MCF 10A (cell line): ENCODE measurements at regions of chr17 and their contacts with region 1.

Region 1: GRCh38 chr17:10618202-10618635 is 38.9 kb downstream of the MYH3 start:
- DNase-seq: peak; percentile 78
- H3K4me3 Mint-ChIP-seq: no peak overlapping the region
- H3K27ac Mint-ChIP-seq: no peak overlapping the region
- H3K4me1 Mint-ChIP-seq: peaks cover 16% of the 10 kb centered on the region
- H3K27me3 Mint-ChIP-seq: no peaks in the 10 kb centered on the region
- CTCF ChIP-seq: peak; percentile 91

Region 2: DNA sequence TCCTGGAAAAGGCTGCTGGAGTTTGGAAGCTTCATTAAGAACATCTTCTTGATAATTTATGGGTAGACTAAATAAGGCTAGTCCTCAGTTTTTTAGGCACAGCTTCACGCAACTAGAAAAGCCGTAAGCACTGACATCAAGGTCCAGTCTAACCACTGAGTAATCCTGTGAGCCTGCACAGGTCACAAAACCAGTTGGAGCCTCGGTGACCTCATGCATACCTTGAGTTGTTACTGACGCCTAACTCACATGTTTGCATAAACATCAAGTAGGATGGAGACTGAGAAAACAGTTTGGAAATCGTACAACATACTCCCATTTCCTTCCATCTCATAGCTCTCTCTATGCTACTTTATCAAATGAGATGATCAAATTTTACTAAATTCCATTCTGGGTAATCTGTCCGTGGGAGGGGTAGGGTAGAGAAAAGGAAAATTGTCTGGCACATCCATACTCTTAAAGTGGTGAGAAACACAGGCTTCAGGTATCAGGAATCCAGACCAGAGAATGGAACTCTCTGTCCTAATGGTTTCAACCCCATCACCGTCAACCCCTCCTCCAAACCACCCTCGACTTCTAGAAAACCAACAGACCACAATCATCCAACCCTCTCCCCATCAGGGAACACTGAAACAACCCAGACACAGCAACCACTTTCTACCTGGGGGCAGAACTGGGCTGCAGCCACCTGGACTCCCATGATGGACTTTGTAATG is 649.2 kb before region 1 on chr17:
- CTCF ChIA-PET with region 1: interaction called, 7 read pairs
- POLR2A ChIA-PET with region 1: no interaction called
- intact Hi-C with region 1: loop called (anchors 1 kb)
- DNase-seq: no peak
- H3K4me3 Mint-ChIP-seq: no peak overlapping the region
- H3K27ac Mint-ChIP-seq: no peak overlapping the region
- H3K4me1 Mint-ChIP-seq: peaks cover 5% of the 10 kb centered on the region
- H3K27me3 Mint-ChIP-seq: no peaks in the 10 kb centered on the region
- CTCF ChIP-seq: no peak

Region 3: GRCh38 chr17:10316801-10317542 is 301.2 kb before region 1 on chr17:
- CTCF ChIA-PET with region 1: interaction called, 26 read pairs
- POLR2A ChIA-PET with region 1: no interaction called
- intact Hi-C with region 1: no loop called
- DNase-seq: peak; percentile 65
- H3K4me3 Mint-ChIP-seq: no peak overlapping the region
- H3K27ac Mint-ChIP-seq: no peak overlapping the region
- H3K4me1 Mint-ChIP-seq: peaks cover 10% of the 10 kb centered on the region
- H3K27me3 Mint-ChIP-seq: peaks cover 25% of the 10 kb centered on the region
- CTCF ChIP-seq: peak; percentile 73

Region 4: GRCh38 chr17:10589553-10590125 is 28.6 kb before region 1 on chr17:
- CTCF ChIA-PET with region 1: interaction called, 29 read pairs
- POLR2A ChIA-PET with region 1: no interaction called
- intact Hi-C with region 1: no loop called
- DNase-seq: no peak
- H3K4me3 Mint-ChIP-seq: no peak overlapping the region
- H3K27ac Mint-ChIP-seq: no peak overlapping the region
- H3K4me1 Mint-ChIP-seq: no peaks in the 10 kb centered on the region
- H3K27me3 Mint-ChIP-seq: peaks cover 42% of the 10 kb centered on the region
- CTCF ChIP-seq: no peak

Region 5: DNA sequence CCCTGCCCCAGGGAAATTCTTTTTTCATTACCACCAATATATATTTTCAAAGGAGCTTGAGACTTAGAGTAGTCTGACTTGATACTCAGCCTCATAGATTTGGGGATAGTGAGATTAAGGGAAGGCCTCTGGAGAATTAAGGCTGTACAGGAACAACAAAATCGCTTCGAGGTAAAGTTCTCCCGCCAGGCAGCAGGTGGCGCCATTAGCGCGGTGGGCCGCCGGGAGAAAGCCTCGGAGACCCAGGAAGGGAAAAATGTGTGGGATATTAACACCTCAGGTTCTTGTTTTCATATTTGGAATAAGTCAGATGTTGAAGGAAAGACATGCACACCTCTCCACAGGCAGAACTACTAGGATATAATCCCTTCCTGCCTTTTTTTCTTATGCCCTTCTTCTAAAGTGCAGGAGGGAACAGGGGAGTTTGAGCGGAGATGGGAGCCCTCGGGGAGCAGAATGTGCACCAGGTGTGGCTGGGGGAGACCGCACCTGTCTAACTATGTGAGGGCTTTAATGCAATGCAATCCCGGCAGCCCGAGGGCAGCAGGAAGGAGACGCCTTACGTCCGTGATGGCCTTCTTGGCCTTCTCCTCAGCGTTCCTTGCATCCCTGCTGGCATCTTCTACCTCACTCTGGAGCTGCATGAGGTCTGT is 13.0 kb after region 1 on chr17:
- CTCF ChIA-PET with region 1: interaction called, 269 read pairs
- POLR2A ChIA-PET with region 1: no interaction called
- intact Hi-C with region 1: no loop called
- DNase-seq: peak; percentile 24
- H3K4me3 Mint-ChIP-seq: no peak overlapping the region
- H3K27ac Mint-ChIP-seq: no peak overlapping the region
- H3K4me1 Mint-ChIP-seq: no peaks in the 10 kb centered on the region
- H3K27me3 Mint-ChIP-seq: no peaks in the 10 kb centered on the region
- CTCF ChIP-seq: peak; percentile 66

Region 6: DNA sequence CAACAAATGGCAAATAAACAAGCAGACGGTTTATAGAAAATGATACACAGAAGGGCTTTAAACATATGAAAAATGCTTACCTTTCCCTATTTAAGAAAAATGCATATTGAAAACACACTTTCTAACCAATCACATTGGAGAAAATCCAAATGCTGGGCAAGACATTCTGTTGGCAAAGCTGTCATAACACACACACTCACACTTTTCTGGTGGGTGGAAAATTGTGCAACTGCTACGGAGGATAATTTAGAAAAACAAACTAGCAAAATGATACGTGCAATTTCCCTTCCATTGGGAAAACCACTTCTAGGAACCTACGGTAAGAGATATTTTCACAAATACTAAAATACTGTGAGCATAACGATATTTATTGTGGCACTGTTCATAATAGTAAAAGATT is 48.7 kb after region 1 on chr17:
- CTCF ChIA-PET with region 1: interaction called, 23 read pairs
- POLR2A ChIA-PET with region 1: no interaction called
- intact Hi-C with region 1: no loop called
- DNase-seq: peak; percentile 6
- H3K4me3 Mint-ChIP-seq: no peak overlapping the region
- H3K27ac Mint-ChIP-seq: no peak overlapping the region
- H3K4me1 Mint-ChIP-seq: no peaks in the 10 kb centered on the region
- H3K27me3 Mint-ChIP-seq: no peaks in the 10 kb centered on the region
- CTCF ChIP-seq: no peak